ENCODE measurements at regions of chr12 and their contacts with region 1.

Region 1: DNA sequence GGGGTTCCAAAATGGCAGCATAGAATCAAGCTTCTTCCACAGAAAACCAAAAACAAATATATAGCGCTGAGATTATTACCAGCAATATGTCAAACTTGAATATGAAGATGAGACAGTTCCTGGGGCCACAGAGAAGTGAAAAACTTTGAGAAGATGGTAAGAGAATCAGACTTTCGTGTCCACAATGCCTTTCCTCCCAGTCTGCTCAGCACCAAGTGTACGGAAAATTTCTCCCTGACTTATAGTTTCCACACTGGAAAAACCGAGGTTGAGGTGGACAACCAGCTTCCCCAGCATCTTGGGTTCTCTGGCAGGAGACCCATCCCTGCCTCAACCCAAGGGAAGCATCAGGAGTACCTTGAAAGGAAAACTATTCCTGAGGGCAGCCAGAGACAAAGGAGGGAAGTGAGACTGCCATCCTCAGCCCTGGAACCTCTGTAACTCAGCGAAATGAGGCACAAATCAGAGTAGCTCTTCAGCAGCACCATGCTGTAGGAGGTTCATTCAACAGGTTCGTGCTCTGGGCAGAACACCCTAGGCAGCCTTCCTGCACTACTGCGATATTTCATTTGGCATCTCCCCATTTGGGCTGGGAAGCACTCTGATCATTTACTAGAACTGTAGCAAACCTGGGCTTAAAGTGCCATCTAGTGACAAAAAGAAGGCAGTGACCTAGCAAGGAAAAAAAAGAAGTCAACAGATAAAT is 52.4 kb upstream of the CAPRIN2 start:
- DNase-seq: peak; percentile 71
- ATAC-seq: peak; percentile 45
- H3K4me3 ChIP-seq: no peak overlapping the region
- H3K4me3 Mint-ChIP-seq: no peak overlapping the region
- H3K27ac ChIP-seq: no peak overlapping the region
- H3K27ac Mint-ChIP-seq: no peak overlapping the region
- H3K4me1 ChIP-seq: no peaks in the 10 kb centered on the region
- H3K4me1 Mint-ChIP-seq: no peaks in the 10 kb centered on the region
- H3K27me3 ChIP-seq: peaks cover 0 to 2% (median 0%) of the 10 kb centered on the region in 4 experiments
- H3K27me3 Mint-ChIP-seq: peaks cover 23% of the 10 kb centered on the region
- CTCF ChIP-seq: peak; percentile 84

Region 2: DNA sequence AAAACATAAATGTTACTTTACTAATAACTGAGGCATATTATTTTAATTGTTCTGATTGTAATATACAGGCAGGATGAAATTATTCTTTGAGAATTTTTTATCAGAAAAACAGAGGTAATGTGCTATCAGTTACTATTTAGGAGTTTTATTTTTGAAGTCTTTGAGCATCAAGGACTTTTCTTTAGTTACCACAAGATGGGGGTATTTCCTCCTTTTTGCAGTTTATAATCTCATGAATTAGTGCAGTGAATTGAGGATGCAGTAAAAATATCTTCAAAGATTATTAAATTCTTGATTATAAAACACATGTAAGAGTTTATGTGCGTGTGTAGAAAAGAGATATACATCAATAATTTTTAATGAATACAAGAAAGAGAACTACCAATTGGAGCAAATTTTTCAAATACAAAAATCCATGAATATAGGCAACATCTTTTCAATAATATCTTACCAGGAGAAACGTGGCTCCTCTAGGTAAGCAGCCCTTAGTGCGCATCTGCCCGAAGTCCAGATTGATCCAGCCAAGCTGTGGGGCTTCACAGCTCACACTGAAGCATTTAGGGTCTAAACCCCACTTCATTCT is 1497.7 kb before region 1 on chr12:
- CTCF ChIA-PET with region 1: no interaction called
- POLR2A ChIA-PET with region 1: no interaction called
- intact Hi-C with region 1: loop called (anchors 5 kb)
- DNase-seq: no peak
- ATAC-seq: no peak
- H3K4me3 ChIP-seq: no peak overlapping the region
- H3K4me3 Mint-ChIP-seq: no peak overlapping the region
- H3K27ac ChIP-seq: no peak overlapping the region
- H3K27ac Mint-ChIP-seq: no peak overlapping the region
- H3K4me1 ChIP-seq: no peaks in the 10 kb centered on the region
- H3K4me1 Mint-ChIP-seq: no peaks in the 10 kb centered on the region
- H3K27me3 ChIP-seq: no peaks in the 10 kb centered on the region
- H3K27me3 Mint-ChIP-seq: no peaks in the 10 kb centered on the region
- CTCF ChIP-seq: no peak

Region 3: DNA sequence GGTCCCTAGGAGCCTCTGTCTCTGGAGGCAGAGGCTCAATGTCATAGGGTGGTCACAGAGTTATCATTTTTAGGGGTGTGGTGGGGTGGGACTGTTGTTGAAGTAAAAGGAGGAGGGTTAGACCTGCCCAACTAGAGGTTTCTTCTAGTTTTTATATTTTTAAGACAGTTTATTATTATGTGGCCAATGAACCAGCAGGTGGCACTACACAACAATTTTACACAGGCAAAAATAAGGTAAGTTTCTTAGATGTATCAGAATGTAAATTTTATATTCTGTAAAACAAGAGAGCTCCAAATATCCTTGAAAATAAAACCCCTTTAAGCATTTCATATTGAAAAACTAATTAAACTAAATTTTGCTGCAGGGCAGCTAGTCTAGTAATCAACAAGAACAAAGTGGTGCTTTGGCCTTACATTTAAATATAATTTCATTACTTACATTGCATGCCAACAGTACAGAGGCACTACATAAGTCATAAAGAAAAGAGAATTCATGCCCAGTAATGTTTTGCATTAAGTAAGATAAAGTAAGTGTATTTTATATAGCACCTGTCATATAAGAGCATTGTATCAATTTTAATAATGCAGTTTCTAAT is 1287.5 kb before region 1 on chr12:
- CTCF ChIA-PET with region 1: interaction called, 37 read pairs
- POLR2A ChIA-PET with region 1: no interaction called
- intact Hi-C with region 1: no loop called
- DNase-seq: peak; percentile 46
- ATAC-seq: no peak
- H3K4me3 ChIP-seq: no peak overlapping the region
- H3K4me3 Mint-ChIP-seq: no peak overlapping the region
- H3K27ac ChIP-seq: no peak overlapping the region
- H3K27ac Mint-ChIP-seq: no peak overlapping the region
- H3K4me1 ChIP-seq: no peaks in the 10 kb centered on the region
- H3K4me1 Mint-ChIP-seq: no peaks in the 10 kb centered on the region
- H3K27me3 ChIP-seq: no peaks in the 10 kb centered on the region
- H3K27me3 Mint-ChIP-seq: peaks cover 9% of the 10 kb centered on the region
- CTCF ChIP-seq: peak; percentile 70

Region 4: GRCh38 chr12:29552324-29552927 is 1254.7 kb before region 1 on chr12:
- CTCF ChIA-PET with region 1: interaction called, 39 read pairs
- POLR2A ChIA-PET with region 1: no interaction called
- intact Hi-C with region 1: loop called (anchors 1 kb)
- DNase-seq: peak; percentile 49
- ATAC-seq: peak; percentile 47
- H3K4me3 ChIP-seq: no peak overlapping the region
- H3K4me3 Mint-ChIP-seq: no peak overlapping the region
- H3K27ac ChIP-seq: no peak overlapping the region
- H3K27ac Mint-ChIP-seq: no peak overlapping the region
- H3K4me1 ChIP-seq: no peaks in the 10 kb centered on the region
- H3K4me1 Mint-ChIP-seq: no peaks in the 10 kb centered on the region
- H3K27me3 ChIP-seq: no peaks in the 10 kb centered on the region
- H3K27me3 Mint-ChIP-seq: peaks cover 7% of the 10 kb centered on the region
- CTCF ChIP-seq: peak; percentile 80

Region 5: DNA sequence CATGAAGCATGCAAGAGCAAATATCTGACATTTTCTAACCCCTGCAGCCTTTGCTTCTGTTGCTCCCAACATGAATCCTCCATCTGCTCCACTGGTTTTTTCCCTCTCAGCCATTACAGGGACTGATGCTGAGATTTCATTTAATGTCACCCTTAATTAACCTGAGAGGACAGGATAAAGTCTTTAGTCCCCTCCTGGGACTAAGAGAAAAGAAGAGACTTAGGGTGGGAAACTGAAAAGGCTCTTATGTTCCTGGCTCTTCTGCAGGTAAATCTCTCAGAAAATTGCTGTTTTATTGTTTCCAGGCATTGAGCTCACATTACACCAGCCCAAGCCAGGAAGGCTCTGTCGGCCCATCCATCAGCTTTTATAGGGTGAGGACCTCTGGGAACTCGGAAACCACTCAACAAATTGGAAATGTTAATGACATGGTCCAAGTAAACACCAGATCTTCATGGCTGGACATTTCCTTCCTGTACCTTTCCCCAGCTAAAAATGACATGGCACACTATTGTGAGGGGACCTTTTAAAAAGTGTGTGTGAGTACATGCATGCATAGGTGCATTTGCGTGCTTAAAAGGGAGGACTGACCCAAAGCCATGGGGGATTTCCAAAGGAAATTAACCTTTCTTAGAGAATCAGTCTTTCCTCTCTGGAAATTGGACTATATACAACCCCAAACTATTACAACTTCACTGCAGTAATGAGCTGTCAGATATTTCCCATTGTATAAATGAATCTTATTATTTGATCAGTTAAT is 615.3 kb before region 1 on chr12:
- CTCF ChIA-PET with region 1: no interaction called
- POLR2A ChIA-PET with region 1: no interaction called
- intact Hi-C with region 1: no loop called
- DNase-seq: no peak
- ATAC-seq: no peak
- H3K4me3 ChIP-seq: no peak overlapping the region
- H3K4me3 Mint-ChIP-seq: no peak overlapping the region
- H3K27ac ChIP-seq: no peak overlapping the region
- H3K27ac Mint-ChIP-seq: no peak overlapping the region
- H3K4me1 ChIP-seq: no peaks in the 10 kb centered on the region
- H3K4me1 Mint-ChIP-seq: no peaks in the 10 kb centered on the region
- H3K27me3 ChIP-seq: no peaks in the 10 kb centered on the region
- H3K27me3 Mint-ChIP-seq: no peaks in the 10 kb centered on the region
- CTCF ChIP-seq: no peak

Region 6: DNA sequence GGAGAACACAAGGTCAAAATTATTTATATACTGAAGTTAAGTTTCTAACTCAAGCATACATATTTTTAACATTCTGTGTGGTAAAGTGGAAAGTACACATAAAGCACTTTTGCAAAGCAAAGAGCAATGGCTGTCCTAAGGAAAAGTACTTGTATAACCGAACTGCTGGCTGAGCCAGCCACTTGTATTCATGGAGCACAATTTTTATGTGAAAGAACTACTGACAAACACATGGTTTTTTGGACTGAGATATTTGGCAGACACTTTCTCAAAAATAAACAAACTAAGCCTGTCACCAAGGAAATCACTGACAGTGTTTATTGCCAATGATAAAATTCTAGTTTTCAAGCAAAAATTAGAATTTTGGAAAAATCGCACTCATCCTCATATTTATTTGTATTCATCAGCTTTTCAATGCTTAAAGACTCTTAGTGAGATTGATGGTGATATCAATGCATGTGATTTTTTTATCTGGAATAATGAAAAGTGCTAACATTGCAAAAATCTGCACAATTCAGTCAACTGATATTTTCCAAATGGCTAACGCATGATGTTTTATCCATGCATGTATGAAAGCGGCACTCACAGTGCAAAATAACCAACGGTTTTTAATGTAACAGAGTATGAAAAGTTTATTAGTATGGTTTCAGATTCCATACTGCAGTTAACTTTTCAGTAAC is 236.8 kb before region 1 on chr12:
- CTCF ChIA-PET with region 1: no interaction called
- POLR2A ChIA-PET with region 1: no interaction called
- intact Hi-C with region 1: no loop called
- DNase-seq: no peak
- ATAC-seq: no peak
- H3K4me3 ChIP-seq: no peak overlapping the region
- H3K4me3 Mint-ChIP-seq: no peak overlapping the region
- H3K27ac ChIP-seq: no peak overlapping the region
- H3K27ac Mint-ChIP-seq: no peak overlapping the region
- H3K4me1 ChIP-seq: no peaks in the 10 kb centered on the region
- H3K4me1 Mint-ChIP-seq: no peaks in the 10 kb centered on the region
- H3K27me3 ChIP-seq: no peaks in the 10 kb centered on the region
- H3K27me3 Mint-ChIP-seq: no peaks in the 10 kb centered on the region
- CTCF ChIP-seq: no peak

Region 7: DNA sequence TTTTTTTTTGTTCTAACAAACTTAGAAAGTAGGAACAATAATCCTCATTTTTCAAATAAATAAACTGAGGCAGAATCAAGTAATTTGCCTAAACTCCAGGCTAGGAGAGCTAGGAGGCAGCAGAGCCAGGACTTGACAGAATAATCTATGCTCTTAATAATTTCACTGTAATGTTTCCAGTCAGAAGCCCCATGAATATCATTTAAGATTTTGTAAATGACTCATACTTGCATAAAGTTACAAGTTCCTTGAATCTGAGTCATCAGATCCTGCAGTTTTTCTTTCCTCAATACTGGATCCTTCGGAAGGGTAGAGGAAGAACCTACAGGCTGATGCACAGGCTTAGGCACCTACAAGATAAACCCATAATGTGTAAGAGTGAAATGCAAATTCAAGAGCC is 81.4 kb before region 1 on chr12:
- CTCF ChIA-PET with region 1: no interaction called
- POLR2A ChIA-PET with region 1: no interaction called
- intact Hi-C with region 1: no loop called
- DNase-seq: no peak
- ATAC-seq: no peak
- H3K4me3 ChIP-seq: no peak overlapping the region
- H3K4me3 Mint-ChIP-seq: no peak overlapping the region
- H3K27ac ChIP-seq: no peak overlapping the region
- H3K27ac Mint-ChIP-seq: no peak overlapping the region
- H3K4me1 ChIP-seq: no peaks in the 10 kb centered on the region
- H3K4me1 Mint-ChIP-seq: no peaks in the 10 kb centered on the region
- H3K27me3 ChIP-seq: no peaks in the 10 kb centered on the region
- H3K27me3 Mint-ChIP-seq: no peaks in the 10 kb centered on the region
- CTCF ChIP-seq: no peak

Measured in B cell (primary cell).